Heart left ventricle (tissue), 16 donors: ENCODE measurements at regions of chr3 and their contacts with region 1.

Region 1: GRCh38 chr3:48548729-48549705 is 7.6 kb downstream of the PFKFB4 start:
- DNase-seq: peak; percentile 84 to 92 (median 88)
- ATAC-seq: peak; percentile 83 to 96 (median 92)
- H3K4me3 ChIP-seq: no peak overlapping the region
- H3K27ac ChIP-seq: no peak overlapping the region
- H3K4me1 ChIP-seq: peaks cover 0 to 24% (median 2%) of the 10 kb centered on the region in 12 donors
- H3K27me3 ChIP-seq: no peaks in the 10 kb centered on the region
- CTCF ChIP-seq: peak; percentile 86 to 98 (median 96)
- POLR2A ChIP-seq: no peak

Region 2: DNA sequence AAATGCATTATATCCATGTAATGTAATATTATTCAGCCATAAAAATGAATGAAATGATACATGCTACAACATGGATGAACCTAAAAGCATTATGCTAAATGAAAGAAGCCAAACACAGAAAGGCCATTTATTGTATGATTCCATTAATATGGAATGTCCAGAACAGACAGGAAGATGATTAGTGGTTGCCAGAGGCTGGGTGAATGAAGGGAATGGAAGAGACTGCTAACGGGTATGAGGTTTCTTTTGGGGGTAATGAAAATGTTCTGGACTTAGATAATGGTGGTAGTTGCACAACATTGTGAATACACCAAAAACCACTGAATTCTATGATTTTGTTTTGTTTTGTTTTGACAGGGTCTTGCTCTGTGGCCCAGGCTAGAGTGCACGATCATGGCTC is 471.2 kb before region 1 on chr3:
- intact Hi-C with region 1: no loop called
- DNase-seq: no peak
- ATAC-seq: peak in 2 of 4 donors; percentile 41 to 44
- H3K4me3 ChIP-seq: no peak overlapping the region
- H3K27ac ChIP-seq: no peak overlapping the region
- H3K4me1 ChIP-seq: peaks cover 0 to 59% (median 18%) of the 10 kb centered on the region in 12 donors
- H3K27me3 ChIP-seq: no peaks in the 10 kb centered on the region
- CTCF ChIP-seq: no peak
- POLR2A ChIP-seq: no peak

Region 3: GRCh38 chr3:48273594-48274211 is 275.3 kb before region 1 on chr3:
- intact Hi-C with region 1: loop called in 8 of 10 experiments (anchors 5 to 10 kb)
- DNase-seq: peak in 3 of 5 donors; percentile 30 to 47 (median 46)
- ATAC-seq: peak in 3 of 4 donors; percentile 65 to 69 (median 69)
- H3K4me3 ChIP-seq: no peak overlapping the region
- H3K27ac ChIP-seq: no peak overlapping the region
- H3K4me1 ChIP-seq: peaks cover 0 to 4% (median 0%) of the 10 kb centered on the region in 12 donors
- H3K27me3 ChIP-seq: no peaks in the 10 kb centered on the region
- CTCF ChIP-seq: peak; percentile 60 to 84 (median 74)
- POLR2A ChIP-seq: no peak

Region 4: DNA sequence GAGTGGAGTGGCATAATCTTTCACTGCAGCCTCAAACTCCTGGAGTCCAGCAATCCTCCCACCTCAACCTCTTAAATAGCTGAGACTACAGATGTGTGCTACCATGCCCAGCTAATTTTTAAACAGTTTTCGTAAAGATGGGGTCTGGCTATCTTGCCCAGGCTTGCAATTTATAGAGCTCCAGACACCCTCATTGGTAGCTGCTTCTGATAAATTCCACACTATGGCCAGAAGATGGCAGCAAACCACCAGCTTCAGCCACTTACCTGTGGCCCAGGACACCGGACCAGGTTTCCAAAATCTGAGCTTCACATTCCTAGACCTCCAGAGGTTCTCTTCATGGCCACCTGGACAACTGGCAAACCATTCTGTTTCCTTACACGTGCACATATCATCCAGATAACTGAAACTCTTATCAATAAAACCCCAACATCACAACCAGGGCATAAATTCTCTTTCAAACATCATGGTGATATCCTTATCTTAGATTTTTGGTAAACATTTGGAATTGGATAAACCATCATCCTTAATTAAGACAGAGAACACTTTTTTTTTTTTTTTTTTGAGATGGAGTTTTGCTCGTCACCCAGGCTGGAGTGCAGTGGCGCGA is 148.1 kb before region 1 on chr3:
- intact Hi-C with region 1: loop called in 7 of 10 experiments (anchors 1 to 5 kb)
- DNase-seq: peak; percentile 46 to 57 (median 49)
- ATAC-seq: peak; percentile 43 to 77 (median 60)
- H3K4me3 ChIP-seq: no peak overlapping the region
- H3K27ac ChIP-seq: peak overlapping the region in 1 of 12 donors; percentile 86
- H3K4me1 ChIP-seq: peaks cover 0 to 11% (median 2%) of the 10 kb centered on the region in 12 donors
- H3K27me3 ChIP-seq: no peaks in the 10 kb centered on the region
- CTCF ChIP-seq: peak; percentile 72 to 89 (median 79)
- POLR2A ChIP-seq: no peak

Region 5: GRCh38 chr3:48446425-48447193 is 102.4 kb before region 1 on chr3 and contains the start of gene ATRIP:
- intact Hi-C with region 1: loop called in 1 of 10 experiments (anchors 5 kb)
- DNase-seq: peak; percentile 91 to 96 (median 93)
- ATAC-seq: peak; percentile 95 to 99 (median 99)
- H3K4me3 ChIP-seq: peak within 1 kb of the TSS; percentile 60 to 98 (median 84)
- H3K27ac ChIP-seq: peak within 1 kb of the TSS; percentile 49 to 94 (median 88)
- H3K4me1 ChIP-seq: peaks cover 4 to 31% (median 23%) of the 10 kb centered on the region in 12 donors
- H3K27me3 ChIP-seq: no peaks in the 10 kb centered on the region
- CTCF ChIP-seq: peak in 3 of 12 donors; percentile 8 to 40 (median 9)
- POLR2A ChIP-seq: peak; percentile 90 to 98
- total RNA-seq, gene ATRIP: 2.1 to 5.0 (median 3.6) TPM

Region 6: GRCh38 chr3:48465531-48466378 is 83.3 kb before region 1 on chr3:
- intact Hi-C with region 1: loop called (anchors 1 to 5 kb)
- DNase-seq: peak; percentile 95 to 99 (median 98)
- ATAC-seq: peak; percentile 95 to 96 (median 95)
- H3K4me3 ChIP-seq: peak overlapping the region; percentile 24 to 84 (median 62)
- H3K27ac ChIP-seq: peak overlapping the region; percentile 92 to 100 (median 99)
- H3K4me1 ChIP-seq: peaks cover 13 to 63% (median 55%) of the 10 kb centered on the region in 12 donors
- H3K27me3 ChIP-seq: no peaks in the 10 kb centered on the region
- CTCF ChIP-seq: peak; percentile 55 to 90 (median 76)
- POLR2A ChIP-seq: peak in 1 of 2 donors; percentile 81

Region 7: GRCh38 chr3:48507351-48508061 is 41.5 kb before region 1 on chr3:
- intact Hi-C with region 1: loop called in 4 of 10 experiments (anchors 2 to 5 kb)
- DNase-seq: peak in 4 of 5 donors; percentile 40 to 45 (median 42)
- ATAC-seq: peak in 1 of 4 donors; percentile 38
- H3K4me3 ChIP-seq: no peak overlapping the region
- H3K27ac ChIP-seq: peak overlapping the region in 1 of 12 donors; percentile 2
- H3K4me1 ChIP-seq: peaks cover 6 to 31% (median 20%) of the 10 kb centered on the region in 12 donors
- H3K27me3 ChIP-seq: no peaks in the 10 kb centered on the region
- CTCF ChIP-seq: peak; percentile 33 to 63 (median 52)
- POLR2A ChIP-seq: no peak